Endothelial cell of umbilical vein (primary cell): ENCODE measurements at regions of chr17 and their contacts with region 1.

Region 1: GRCh38 chr17:41665566-41666236 is 23.0 kb upstream of the EIF1 start:
- DNase-seq: peak; percentile 83
- H3K4me3 ChIP-seq: peak overlapping the region in 2 of 3 experiments; percentile 13 to 32
- H3K27ac ChIP-seq: peak overlapping the region; percentile 49
- H3K4me1 ChIP-seq: peaks cover 23% of the 10 kb centered on the region
- H3K27me3 ChIP-seq: no peaks in the 10 kb centered on the region
- CTCF ChIP-seq: peak; percentile 96 to 99
- POLR2A ChIP-seq: no peak

Region 2: DNA sequence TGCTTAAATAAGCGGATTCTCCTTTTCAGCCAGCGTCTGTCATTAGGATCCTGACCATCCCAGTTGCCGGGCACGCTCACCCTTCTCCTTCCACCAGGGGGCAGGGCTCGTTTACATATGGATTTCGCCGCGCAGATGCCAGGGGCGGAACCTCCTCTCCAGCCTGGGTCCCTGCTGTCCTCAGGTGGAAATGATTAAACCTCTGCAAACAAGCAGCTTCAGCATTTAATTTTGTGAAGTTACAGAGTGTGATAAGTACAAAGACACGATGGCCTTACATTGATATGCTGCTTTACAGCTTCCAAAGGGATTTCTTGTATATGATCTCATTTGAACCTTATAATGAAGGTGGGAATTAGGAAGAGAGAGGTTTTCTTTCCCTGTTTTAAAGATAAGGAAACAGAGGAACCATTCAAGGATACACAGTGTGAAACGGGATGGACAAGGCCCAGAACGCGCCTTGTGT is 862.1 kb before region 1 on chr17:
- CTCF ChIA-PET with region 1: interaction called, 77 read pairs
- POLR2A ChIA-PET with region 1: no interaction called
- dilution Hi-C with region 1: no loop called
- intact Hi-C with region 1: loop called (anchors 1 kb)
- DNase-seq: peak; percentile 71
- H3K4me3 ChIP-seq: no peak overlapping the region
- H3K27ac ChIP-seq: no peak overlapping the region
- H3K4me1 ChIP-seq: no peaks in the 10 kb centered on the region
- H3K27me3 ChIP-seq: peaks cover 20 to 39% of the 10 kb centered on the region in 2 experiments
- CTCF ChIP-seq: peak; percentile 85 to 88
- POLR2A ChIP-seq: no peak

Region 3: DNA sequence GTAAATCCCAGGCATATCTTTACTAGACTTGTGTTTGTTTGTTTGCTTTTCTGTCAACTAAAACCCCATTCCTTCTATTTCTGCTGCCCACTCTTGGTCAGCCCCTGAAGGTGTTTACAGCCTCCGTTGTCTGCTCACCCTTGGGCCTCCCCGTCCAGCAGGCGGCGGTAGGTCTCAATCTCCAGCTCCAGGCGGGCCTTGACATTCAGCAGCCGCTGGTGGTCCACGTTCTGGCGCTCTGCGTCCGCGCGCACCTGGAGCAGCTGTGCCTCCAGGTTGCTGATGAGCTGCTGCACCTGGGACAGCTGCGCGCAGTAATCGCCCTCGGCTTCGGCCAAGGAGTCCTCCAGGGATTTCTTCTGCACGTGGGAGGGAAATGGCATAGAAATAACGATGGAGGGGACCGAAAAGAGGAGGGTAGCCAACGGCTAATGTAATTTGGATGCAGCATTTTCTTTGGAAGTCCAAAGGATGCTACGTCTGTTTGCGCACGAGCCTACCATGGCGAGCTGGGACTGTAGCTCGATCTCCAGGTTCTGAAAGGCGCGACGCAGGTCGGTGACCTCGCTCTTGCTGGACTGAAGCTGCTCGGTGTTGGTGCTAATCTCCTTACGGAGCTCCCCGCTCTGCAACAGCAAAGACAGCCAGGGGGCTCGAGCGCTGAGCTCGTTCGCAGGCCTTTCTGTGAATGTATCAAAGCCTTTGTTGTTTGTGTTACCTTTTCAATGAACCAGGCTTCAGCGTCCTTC is 802.5 kb before region 1 on chr17:
- CTCF ChIA-PET with region 1: interaction called, 177 read pairs
- POLR2A ChIA-PET with region 1: no interaction called
- dilution Hi-C with region 1: no loop called
- intact Hi-C with region 1: no loop called
- DNase-seq: peak; percentile 19
- H3K4me3 ChIP-seq: no peak overlapping the region
- H3K27ac ChIP-seq: no peak overlapping the region
- H3K4me1 ChIP-seq: no peaks in the 10 kb centered on the region
- H3K27me3 ChIP-seq: peaks cover 0 to 10% of the 10 kb centered on the region in 2 experiments
- CTCF ChIP-seq: peak; percentile 37 to 70
- POLR2A ChIP-seq: no peak

Region 4: GRCh38 chr17:41428591-41429291 is 237.0 kb before region 1 on chr17:
- CTCF ChIA-PET with region 1: no interaction called
- POLR2A ChIA-PET with region 1: no interaction called
- dilution Hi-C with region 1: no loop called
- intact Hi-C with region 1: no loop called
- DNase-seq: no peak
- H3K4me3 ChIP-seq: no peak overlapping the region
- H3K27ac ChIP-seq: no peak overlapping the region
- H3K4me1 ChIP-seq: no peaks in the 10 kb centered on the region
- H3K27me3 ChIP-seq: peaks cover 0 to 3% of the 10 kb centered on the region in 2 experiments
- CTCF ChIP-seq: no peak
- POLR2A ChIP-seq: no peak

Region 5: GRCh38 chr17:41486809-41487720 is 178.6 kb before region 1 on chr17:
- CTCF ChIA-PET with region 1: interaction called, 56 read pairs
- POLR2A ChIA-PET with region 1: no interaction called
- dilution Hi-C with region 1: no loop called
- intact Hi-C with region 1: loop called (anchors 2 kb)
- DNase-seq: peak; percentile 28
- H3K4me3 ChIP-seq: no peak overlapping the region
- H3K27ac ChIP-seq: no peak overlapping the region
- H3K4me1 ChIP-seq: no peaks in the 10 kb centered on the region
- H3K27me3 ChIP-seq: no peaks in the 10 kb centered on the region
- CTCF ChIP-seq: peak; percentile 65 to 80
- POLR2A ChIP-seq: no peak

Region 6: GRCh38 chr17:41559548-41559947 is 106.2 kb before region 1 on chr17:
- CTCF ChIA-PET with region 1: interaction called, 369 read pairs
- POLR2A ChIA-PET with region 1: no interaction called
- dilution Hi-C with region 1: no loop called
- intact Hi-C with region 1: no loop called
- DNase-seq: no peak
- H3K4me3 ChIP-seq: no peak overlapping the region
- H3K27ac ChIP-seq: no peak overlapping the region
- H3K4me1 ChIP-seq: peaks cover 10% of the 10 kb centered on the region
- H3K27me3 ChIP-seq: peaks cover 24 to 38% of the 10 kb centered on the region in 2 experiments
- CTCF ChIP-seq: no peak
- POLR2A ChIP-seq: no peak

Region 7: GRCh38 chr17:41648411-41649195 is 17.1 kb before region 1 on chr17:
- CTCF ChIA-PET with region 1: interaction called, 303 read pairs
- POLR2A ChIA-PET with region 1: interaction called, 4 read pairs
- dilution Hi-C with region 1: no loop called
- intact Hi-C with region 1: loop called (anchors 1 kb)
- DNase-seq: peak; percentile 78
- H3K4me3 ChIP-seq: peak overlapping the region in 1 of 3 experiments; percentile 25
- H3K27ac ChIP-seq: no peak overlapping the region
- H3K4me1 ChIP-seq: peaks cover 7% of the 10 kb centered on the region
- H3K27me3 ChIP-seq: no peaks in the 10 kb centered on the region
- CTCF ChIP-seq: peak; percentile 96 to 98
- POLR2A ChIP-seq: no peak